B cell (primary cell): ENCODE measurements at regions of chr6 and their contacts with region 1.

Region 1: GRCh38 chr6:109482905-109483735 is at the start of gene ZBTB24:
- DNase-seq: peak; percentile 93
- ATAC-seq: peak; percentile 83
- H3K4me3 ChIP-seq: peak within 1 kb of the TSS; percentile 76 to 97 (median 94)
- H3K4me3 Mint-ChIP-seq: peak within 1 kb of the TSS; percentile 96
- H3K27ac ChIP-seq: peak within 1 kb of the TSS; percentile 65 to 81
- H3K27ac Mint-ChIP-seq: peak within 1 kb of the TSS; percentile 89
- H3K4me1 ChIP-seq: peaks cover 40 to 57% of the 10 kb centered on the region in 2 donors
- H3K4me1 Mint-ChIP-seq: peaks cover 50% of the 10 kb centered on the region
- H3K27me3 ChIP-seq: no peaks in the 10 kb centered on the region
- H3K27me3 Mint-ChIP-seq: no peaks in the 10 kb centered on the region
- CTCF ChIP-seq: no peak
- total RNA-seq, gene ZBTB24: 31.4 and 32.9 TPM in 2 replicates

Region 2: GRCh38 chr6:109204511-109204910 is 278.6 kb before region 1 on chr6:
- CTCF ChIA-PET with region 1: no interaction called
- POLR2A ChIA-PET with region 1: no interaction called
- intact Hi-C with region 1: no loop called
- DNase-seq: no peak
- ATAC-seq: no peak
- H3K4me3 ChIP-seq: no peak overlapping the region
- H3K4me3 Mint-ChIP-seq: no peak overlapping the region
- H3K27ac ChIP-seq: no peak overlapping the region
- H3K27ac Mint-ChIP-seq: no peak overlapping the region
- H3K4me1 ChIP-seq: no peaks in the 10 kb centered on the region
- H3K4me1 Mint-ChIP-seq: no peaks in the 10 kb centered on the region
- H3K27me3 ChIP-seq: no peaks in the 10 kb centered on the region
- H3K27me3 Mint-ChIP-seq: no peaks in the 10 kb centered on the region
- CTCF ChIP-seq: no peak

Region 3: DNA sequence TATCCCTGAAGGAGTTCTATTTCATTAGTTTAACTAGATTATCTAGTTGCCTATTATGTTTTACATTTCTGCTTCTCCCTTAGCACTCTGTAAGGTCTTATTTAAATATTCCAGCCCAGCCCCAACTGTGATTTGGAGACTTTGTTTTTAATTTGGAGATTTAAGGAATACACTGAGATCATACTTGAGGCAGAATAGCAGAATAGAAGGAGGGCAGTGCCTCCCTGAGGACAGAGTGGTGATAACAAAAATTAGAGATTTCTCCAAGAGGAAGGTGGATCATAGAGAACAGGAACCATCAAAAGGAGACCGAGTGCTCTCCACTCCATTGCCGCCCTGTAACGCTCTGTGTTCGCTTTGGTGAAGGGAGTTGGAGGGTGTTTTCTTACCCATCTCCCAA is 86.1 kb before region 1 on chr6:
- CTCF ChIA-PET with region 1: no interaction called
- POLR2A ChIA-PET with region 1: no interaction called
- intact Hi-C with region 1: no loop called
- DNase-seq: no peak
- ATAC-seq: no peak
- H3K4me3 ChIP-seq: no peak overlapping the region
- H3K4me3 Mint-ChIP-seq: no peak overlapping the region
- H3K27ac ChIP-seq: no peak overlapping the region
- H3K27ac Mint-ChIP-seq: no peak overlapping the region
- H3K4me1 ChIP-seq: no peaks in the 10 kb centered on the region
- H3K4me1 Mint-ChIP-seq: no peaks in the 10 kb centered on the region
- H3K27me3 ChIP-seq: no peaks in the 10 kb centered on the region
- H3K27me3 Mint-ChIP-seq: peaks cover 4% of the 10 kb centered on the region
- CTCF ChIP-seq: no peak

Region 4: GRCh38 chr6:109513571-109514071 is 30.5 kb after region 1 on chr6:
- CTCF ChIA-PET with region 1: no interaction called
- POLR2A ChIA-PET with region 1: no interaction called
- intact Hi-C with region 1: no loop called
- DNase-seq: no peak
- ATAC-seq: no peak
- H3K4me3 ChIP-seq: no peak overlapping the region
- H3K4me3 Mint-ChIP-seq: no peak overlapping the region
- H3K27ac ChIP-seq: no peak overlapping the region
- H3K27ac Mint-ChIP-seq: no peak overlapping the region
- H3K4me1 ChIP-seq: peaks cover 6 to 9% of the 10 kb centered on the region in 2 donors
- H3K4me1 Mint-ChIP-seq: peaks cover 14% of the 10 kb centered on the region
- H3K27me3 ChIP-seq: no peaks in the 10 kb centered on the region
- H3K27me3 Mint-ChIP-seq: no peaks in the 10 kb centered on the region
- CTCF ChIP-seq: no peak

Region 5: DNA sequence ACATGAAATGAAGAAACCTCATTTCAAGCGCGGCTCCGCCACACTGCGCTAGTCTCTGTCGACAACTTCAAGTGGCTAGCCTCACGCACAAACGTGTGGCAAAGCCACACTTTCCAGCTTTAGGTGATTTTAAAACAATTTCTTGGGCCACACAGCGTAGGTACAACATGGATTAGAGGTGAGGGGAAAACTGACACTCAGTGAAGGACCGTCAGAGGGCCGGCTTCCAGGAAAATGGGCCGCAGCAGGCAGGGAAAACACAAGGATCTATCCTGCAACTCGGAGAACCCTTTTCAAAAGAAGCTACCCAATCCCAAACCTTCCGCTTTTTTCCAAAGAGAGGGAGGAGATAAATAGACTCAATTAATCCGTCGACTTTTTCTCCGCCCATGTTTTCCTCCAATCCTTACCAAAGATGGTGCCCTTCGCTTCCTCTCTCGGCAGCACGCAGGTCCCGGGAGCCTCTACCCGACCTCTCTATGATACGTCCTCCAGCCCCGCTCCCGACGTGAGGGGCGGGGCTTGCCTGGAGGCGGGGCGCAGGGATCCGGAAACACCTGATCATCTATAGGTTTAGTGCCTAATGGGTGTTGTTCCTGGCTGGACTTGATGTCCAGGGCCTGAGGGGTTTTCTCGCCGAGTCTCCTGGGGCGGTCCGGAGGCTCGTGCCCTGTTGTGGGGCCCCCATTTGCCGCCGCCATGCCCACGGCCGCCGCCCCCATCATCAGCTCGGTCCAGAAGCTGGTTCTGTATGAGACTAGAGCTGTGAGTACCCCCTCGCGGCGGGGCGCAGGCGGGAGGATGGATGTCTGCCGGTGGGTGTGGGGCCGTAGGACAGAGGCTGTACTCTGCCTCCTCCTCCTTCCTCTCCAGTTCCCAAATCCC is 207.9 kb after region 1 on chr6 and contains the starts of genes AK9 and FIG4:
- CTCF ChIA-PET with region 1: no interaction called
- POLR2A ChIA-PET with region 1: no interaction called
- intact Hi-C with region 1: loop called (anchors 2 kb)
- DNase-seq: peak; percentile 91
- ATAC-seq: peak; percentile 92
- H3K4me3 ChIP-seq: peak within 1 kb of the TSS; percentile 82 to 99 (median 93)
- H3K4me3 Mint-ChIP-seq: peak within 1 kb of the TSS; percentile 90
- H3K27ac ChIP-seq: peak within 1 kb of the TSS; percentile 77 to 93
- H3K27ac Mint-ChIP-seq: peak within 1 kb of the TSS; percentile 99
- H3K4me1 ChIP-seq: peaks cover 26 to 29% of the 10 kb centered on the region in 2 donors
- H3K4me1 Mint-ChIP-seq: peaks cover 39% of the 10 kb centered on the region
- H3K27me3 ChIP-seq: no peaks in the 10 kb centered on the region
- H3K27me3 Mint-ChIP-seq: no peaks in the 10 kb centered on the region
- CTCF ChIP-seq: peak; percentile 26
- total RNA-seq, gene AK9: 26.5 and 27.1 TPM in 2 replicates
- total RNA-seq, gene FIG4: 31.5 and 32.8 TPM in 2 replicates